CD8-positive, alpha-beta T cell (primary cell): ENCODE measurements at regions of chr22 and their contacts with region 1.

Region 1: GRCh38 chr22:41204992-41205900 is at the start of gene L3MBTL2:
- DNase-seq: peak; percentile 96 to 99 (median 98)
- ATAC-seq: peak; percentile 100
- H3K4me3 ChIP-seq: peak within 1 kb of the TSS; percentile 77 to 83
- H3K4me3 Mint-ChIP-seq: peak within 1 kb of the TSS; percentile 97
- H3K27ac ChIP-seq: peak within 1 kb of the TSS; percentile 60 to 83
- H3K27ac Mint-ChIP-seq: peak within 1 kb of the TSS; percentile 96
- H3K4me1 ChIP-seq: peaks cover 9% of the 10 kb centered on the region
- H3K4me1 Mint-ChIP-seq: peaks cover 32% of the 10 kb centered on the region
- H3K27me3 ChIP-seq: peaks cover 0 to 2% of the 10 kb centered on the region in 2 experiments
- H3K27me3 Mint-ChIP-seq: peaks cover 9% of the 10 kb centered on the region
- CTCF ChIP-seq: no peak
- total RNA-seq, gene L3MBTL2: 16.3 to 20.3 TPM

Region 2: GRCh38 chr22:40856513-40857308 is 348.5 kb before region 1 on chr22 and contains the starts of genes ST13 and XPNPEP3:
- CTCF ChIA-PET with region 1: no interaction called
- POLR2A ChIA-PET with region 1: no interaction called
- intact Hi-C with region 1: loop called in 1 of 2 experiments (anchors 2 kb)
- DNase-seq: peak; percentile 92 to 98 (median 97)
- ATAC-seq: peak; percentile 88
- H3K4me3 ChIP-seq: peak within 1 kb of the TSS; percentile 85 to 97
- H3K4me3 Mint-ChIP-seq: peak within 1 kb of the TSS; percentile 98
- H3K27ac ChIP-seq: peak within 1 kb of the TSS; percentile 97 to 99
- H3K27ac Mint-ChIP-seq: peak within 1 kb of the TSS; percentile 100
- H3K4me1 ChIP-seq: peaks cover 40% of the 10 kb centered on the region
- H3K4me1 Mint-ChIP-seq: peaks cover 65% of the 10 kb centered on the region
- H3K27me3 ChIP-seq: no peaks in the 10 kb centered on the region
- H3K27me3 Mint-ChIP-seq: no peaks in the 10 kb centered on the region
- CTCF ChIP-seq: peak; percentile 42
- total RNA-seq, gene ST13: 143 to 160 TPM
- total RNA-seq, gene XPNPEP3: 13.9 to 15.2 TPM

Region 3: GRCh38 chr22:41110968-41111367 is 94.3 kb before region 1 on chr22:
- CTCF ChIA-PET with region 1: no interaction called
- POLR2A ChIA-PET with region 1: no interaction called
- intact Hi-C with region 1: no loop called
- DNase-seq: no peak
- ATAC-seq: no peak
- H3K4me3 ChIP-seq: no peak overlapping the region
- H3K4me3 Mint-ChIP-seq: no peak overlapping the region
- H3K27ac ChIP-seq: no peak overlapping the region
- H3K27ac Mint-ChIP-seq: no peak overlapping the region
- H3K4me1 ChIP-seq: peaks cover 21% of the 10 kb centered on the region
- H3K4me1 Mint-ChIP-seq: peaks cover 59% of the 10 kb centered on the region
- H3K27me3 ChIP-seq: no peaks in the 10 kb centered on the region
- H3K27me3 Mint-ChIP-seq: no peaks in the 10 kb centered on the region
- CTCF ChIP-seq: no peak

Region 4: DNA sequence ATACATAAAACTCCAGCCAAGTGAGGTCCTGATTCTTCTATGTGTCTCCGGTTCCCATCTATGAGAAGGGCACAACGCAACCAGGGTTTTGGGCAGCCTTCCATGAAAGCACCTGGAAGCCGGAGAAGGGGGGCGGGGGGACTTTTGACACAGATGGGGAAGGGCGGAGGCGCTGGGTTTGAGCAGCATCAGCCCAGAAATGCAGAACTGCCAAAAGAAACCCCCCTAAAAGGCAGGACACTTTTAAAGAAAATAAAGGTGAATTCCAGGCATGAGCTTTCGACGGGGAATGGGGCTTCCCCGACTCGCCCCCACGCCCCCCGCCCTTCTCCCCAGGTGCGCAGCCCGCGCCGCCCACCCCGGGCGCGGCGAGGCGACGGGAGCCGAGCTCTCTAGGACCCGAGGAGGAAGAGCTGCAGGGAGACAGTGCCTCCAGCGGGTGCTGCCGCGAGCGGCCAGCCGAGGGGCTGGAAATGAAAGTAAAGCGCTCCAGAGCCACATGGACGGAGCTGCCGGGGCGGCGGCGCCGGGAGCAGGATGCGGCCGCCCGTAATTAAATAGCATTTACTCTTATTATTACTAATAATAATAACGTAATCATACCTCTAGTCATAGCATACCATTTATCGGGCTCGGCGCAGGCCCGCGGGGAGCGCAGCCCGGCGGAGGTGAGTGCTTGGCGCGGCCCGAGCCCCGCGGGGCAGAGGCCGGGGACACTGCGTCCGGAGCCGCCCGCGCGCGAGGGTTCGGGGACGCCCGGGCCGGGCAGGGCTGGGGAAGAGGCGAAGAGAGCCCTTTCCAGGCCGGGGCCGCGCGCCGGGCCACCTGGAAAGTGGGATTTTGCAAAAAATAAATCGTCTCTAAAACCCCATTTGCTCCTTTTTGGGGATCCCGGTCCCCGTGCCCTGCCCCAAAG is 96.1 kb after region 1 on chr22 and contains the start of gene ZC3H7B:
- CTCF ChIA-PET with region 1: no interaction called
- POLR2A ChIA-PET with region 1: no interaction called
- intact Hi-C with region 1: loop called in 1 of 2 experiments (anchors 1 kb)
- DNase-seq: peak; percentile 64 to 94 (median 81)
- ATAC-seq: peak; percentile 93
- H3K4me3 ChIP-seq: peak within 1 kb of the TSS; percentile 81 to 96
- H3K4me3 Mint-ChIP-seq: peak within 1 kb of the TSS; percentile 83
- H3K27ac ChIP-seq: peak within 1 kb of the TSS; percentile 72 to 80
- H3K27ac Mint-ChIP-seq: peak within 1 kb of the TSS; percentile 95
- H3K4me1 ChIP-seq: peaks cover 16% of the 10 kb centered on the region
- H3K4me1 Mint-ChIP-seq: peaks cover 29% of the 10 kb centered on the region
- H3K27me3 ChIP-seq: no peaks in the 10 kb centered on the region
- H3K27me3 Mint-ChIP-seq: no peaks in the 10 kb centered on the region
- CTCF ChIP-seq: peak; percentile 43
- total RNA-seq, gene ZC3H7B: 30.7 to 30.8 TPM

Region 5: GRCh38 chr22:41491374-41492100 is 286.3 kb after region 1 on chr22:
- CTCF ChIA-PET with region 1: no interaction called
- POLR2A ChIA-PET with region 1: no interaction called
- intact Hi-C with region 1: no loop called
- DNase-seq: no peak
- ATAC-seq: no peak
- H3K4me3 ChIP-seq: no peak overlapping the region
- H3K4me3 Mint-ChIP-seq: no peak overlapping the region
- H3K27ac ChIP-seq: no peak overlapping the region
- H3K27ac Mint-ChIP-seq: peak overlapping the region; percentile 22
- H3K4me1 ChIP-seq: no peaks in the 10 kb centered on the region
- H3K4me1 Mint-ChIP-seq: peaks cover 32% of the 10 kb centered on the region
- H3K27me3 ChIP-seq: no peaks in the 10 kb centered on the region
- H3K27me3 Mint-ChIP-seq: no peaks in the 10 kb centered on the region
- CTCF ChIP-seq: no peak

Region 6: GRCh38 chr22:41543854-41544670 is 338.8 kb after region 1 on chr22 and contains the start of gene POLR3H:
- CTCF ChIA-PET with region 1: no interaction called
- POLR2A ChIA-PET with region 1: no interaction called
- intact Hi-C with region 1: loop called in 1 of 2 experiments (anchors 10 kb)
- DNase-seq: peak; percentile 92 to 99 (median 97)
- ATAC-seq: peak; percentile 98
- H3K4me3 ChIP-seq: peak within 1 kb of the TSS; percentile 75 to 95
- H3K4me3 Mint-ChIP-seq: peak within 1 kb of the TSS; percentile 98
- H3K27ac ChIP-seq: peak within 1 kb of the TSS; percentile 82 to 83
- H3K27ac Mint-ChIP-seq: peak within 1 kb of the TSS; percentile 94
- H3K4me1 ChIP-seq: peaks cover 30% of the 10 kb centered on the region
- H3K4me1 Mint-ChIP-seq: peaks cover 40% of the 10 kb centered on the region
- H3K27me3 ChIP-seq: no peaks in the 10 kb centered on the region
- H3K27me3 Mint-ChIP-seq: no peaks in the 10 kb centered on the region
- CTCF ChIP-seq: no peak
- total RNA-seq, gene POLR3H: 11.2 to 11.7 TPM